ENCODE measurements at regions of chr2 and their contacts with region 1.

Region 1: DNA sequence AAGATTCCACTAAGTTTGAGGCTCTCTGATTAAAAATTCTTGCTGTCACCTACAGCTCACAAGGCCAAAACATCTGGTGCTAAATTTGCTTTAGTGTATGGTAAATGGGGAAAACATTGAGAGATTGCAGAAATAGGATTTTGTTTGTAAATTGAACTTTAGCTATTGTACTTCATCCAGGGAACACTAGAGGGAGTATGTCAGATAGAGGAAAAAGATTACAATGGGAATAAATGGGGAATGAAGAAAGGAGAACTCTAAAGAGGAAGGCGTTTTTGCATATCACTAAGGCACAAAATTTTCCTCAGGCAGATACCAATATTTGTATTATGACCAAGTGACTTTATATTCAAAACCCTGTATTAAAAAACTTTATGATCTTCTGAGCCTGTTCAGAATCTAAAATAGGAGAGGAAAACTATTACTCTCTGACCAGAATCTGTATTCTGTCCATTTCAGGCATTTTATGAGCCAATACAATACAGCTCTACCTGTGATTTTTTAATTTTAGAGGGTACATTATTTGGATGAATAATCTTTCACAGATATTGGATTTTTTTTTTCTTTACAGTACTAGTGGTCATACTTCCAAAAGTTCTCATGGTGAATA is 52.3 kb upstream of the ITGB6 start:
- H3K4me3 ChIP-seq: no peak overlapping the region
- H3K27ac ChIP-seq: no peak overlapping the region
- H3K4me1 ChIP-seq: no peaks in the 10 kb centered on the region
- CTCF ChIP-seq: 0 out of 2 replicates have a peak, but pooled peaks have one; percentile 35

Region 2: GRCh38 chr2:160229592-160229991 is 22.8 kb before region 1 on chr2:
- CTCF ChIA-PET with region 1: interaction called, 19 read pairs
- POLR2A ChIA-PET with region 1: no interaction called
- H3K4me3 ChIP-seq: no peak overlapping the region
- H3K27ac ChIP-seq: no peak overlapping the region
- H3K4me1 ChIP-seq: peaks cover 2% of the 10 kb centered on the region; the same call in 1 of the 2 replicates
- CTCF ChIP-seq: no peak

Region 3: DNA sequence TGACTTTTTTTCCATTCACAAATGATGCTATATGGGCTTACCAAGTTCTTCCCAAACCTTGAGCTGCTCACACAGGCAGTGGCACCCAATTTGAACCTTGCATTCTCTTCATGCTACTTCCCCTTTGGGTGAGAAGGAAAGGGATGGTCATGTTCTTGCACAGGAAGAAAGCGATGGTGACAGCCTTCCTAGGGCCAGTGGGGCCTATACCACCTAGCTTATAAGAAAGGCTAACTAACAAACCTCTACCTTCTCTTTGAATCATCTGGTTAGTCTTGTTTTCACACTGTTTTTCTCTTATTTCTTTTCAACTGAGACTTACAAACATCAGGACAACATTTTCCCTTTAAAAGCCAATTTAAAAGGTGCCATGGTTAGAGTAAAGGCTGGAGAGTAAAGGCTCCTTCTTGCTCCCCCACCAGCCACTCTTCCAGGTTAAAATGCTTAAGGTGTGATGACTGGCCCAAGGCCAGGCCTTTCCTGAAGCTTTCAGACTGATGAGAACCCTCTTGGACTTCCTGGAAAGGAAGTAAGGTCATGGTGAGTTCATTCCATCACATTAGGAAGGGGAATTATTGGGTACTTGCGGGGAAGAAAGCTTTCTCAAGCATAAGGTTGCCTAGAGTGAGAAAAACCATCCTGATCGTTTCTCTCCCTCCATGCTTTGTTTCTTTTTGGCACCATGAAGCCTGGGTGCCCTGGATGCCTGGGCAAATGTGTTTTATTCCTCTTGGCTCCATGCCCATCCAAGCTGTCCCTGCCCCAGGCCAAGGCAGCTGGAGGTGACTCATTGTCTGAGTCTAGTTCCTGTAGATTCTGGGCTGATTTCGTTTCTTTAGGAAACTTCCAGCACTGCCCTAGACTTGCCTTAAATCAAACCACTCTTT is 10.9 kb before region 1 on chr2:
- CTCF ChIA-PET with region 1: interaction called, 16 read pairs
- POLR2A ChIA-PET with region 1: no interaction called
- H3K4me3 ChIP-seq: no peak overlapping the region
- H3K27ac ChIP-seq: peak overlapping the region; percentile 48
- H3K4me1 ChIP-seq: peaks cover 11% of the 10 kb centered on the region
- CTCF ChIP-seq: no peak

Region 4: GRCh38 chr2:160269803-160270570 is 17.6 kb after region 1 on chr2:
- CTCF ChIA-PET with region 1: interaction called, 21 read pairs
- POLR2A ChIA-PET with region 1: no interaction called
- H3K4me3 ChIP-seq: peak overlapping the region; percentile 49
- H3K27ac ChIP-seq: peak overlapping the region; percentile 61
- H3K4me1 ChIP-seq: no peaks in the 10 kb centered on the region
- CTCF ChIP-seq: peak; percentile 94

Region 5: GRCh38 chr2:160278879-160279177 is 26.4 kb after region 1 on chr2:
- CTCF ChIA-PET with region 1: interaction called, 10 read pairs
- POLR2A ChIA-PET with region 1: no interaction called
- H3K4me3 ChIP-seq: no peak overlapping the region
- H3K27ac ChIP-seq: no peak overlapping the region
- H3K4me1 ChIP-seq: no peaks in the 10 kb centered on the region
- CTCF ChIP-seq: no peak